ENCODE measurements at regions of chr1 and their contacts with region 1.

Region 1: DNA sequence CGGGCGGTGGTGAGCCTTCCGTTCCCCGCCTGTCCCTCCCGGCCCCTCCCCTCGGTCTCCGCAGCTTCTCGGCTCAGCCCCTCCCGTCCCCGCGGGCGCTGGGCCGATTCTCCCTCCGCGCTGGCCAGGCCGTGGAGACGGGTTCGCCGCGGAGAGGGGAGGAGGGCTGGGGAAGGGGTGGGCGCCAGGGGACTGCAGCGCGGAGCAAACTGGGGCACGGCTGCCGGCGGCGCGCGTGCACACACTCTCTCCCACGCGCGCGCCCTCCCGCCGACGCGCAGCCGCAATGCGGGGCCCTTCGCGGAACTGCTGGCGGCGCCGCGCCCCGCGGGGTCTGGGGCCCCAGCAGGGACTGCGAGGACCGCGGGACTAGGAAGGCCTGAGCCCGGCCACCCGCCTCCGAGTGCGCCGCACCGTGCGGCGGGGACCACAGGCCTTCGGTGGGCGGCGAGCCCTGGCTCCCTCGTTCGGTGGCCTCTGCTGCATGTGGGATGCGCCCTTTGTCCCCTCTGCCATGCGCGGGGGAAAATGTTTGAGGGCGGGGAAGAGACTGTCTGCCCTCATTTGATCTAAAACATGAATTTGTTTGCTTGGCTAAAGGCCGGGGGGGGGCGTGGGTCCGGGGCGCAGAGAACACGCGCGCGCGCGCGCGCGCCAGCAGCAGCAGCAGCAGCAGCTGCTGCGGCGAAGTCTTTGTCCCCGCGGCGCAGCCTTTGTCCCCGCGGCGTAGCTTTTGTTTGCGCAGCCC is 90.7 kb upstream of the VAMP3 start:
- DNase-seq: peak; percentile 70
- H3K4me3 ChIP-seq: peak overlapping the region; percentile 66
- H3K27ac ChIP-seq: peak overlapping the region; percentile 86
- H3K4me1 ChIP-seq: peaks cover 11% of the 10 kb centered on the region
- H3K27me3 ChIP-seq: no peaks in the 10 kb centered on the region
- CTCF ChIP-seq: no peak

Region 2: GRCh38 chr1:7667625-7668218 is 12.7 kb before region 1 on chr1:
- CTCF ChIA-PET with region 1: interaction called, 10 read pairs
- POLR2A ChIA-PET with region 1: no interaction called
- intact Hi-C with region 1: no loop called
- DNase-seq: peak; percentile 87
- H3K4me3 ChIP-seq: no peak overlapping the region
- H3K27ac ChIP-seq: no peak overlapping the region
- H3K4me1 ChIP-seq: peaks cover 4% of the 10 kb centered on the region
- H3K27me3 ChIP-seq: no peaks in the 10 kb centered on the region
- CTCF ChIP-seq: peak; percentile 99

Region 3: DNA sequence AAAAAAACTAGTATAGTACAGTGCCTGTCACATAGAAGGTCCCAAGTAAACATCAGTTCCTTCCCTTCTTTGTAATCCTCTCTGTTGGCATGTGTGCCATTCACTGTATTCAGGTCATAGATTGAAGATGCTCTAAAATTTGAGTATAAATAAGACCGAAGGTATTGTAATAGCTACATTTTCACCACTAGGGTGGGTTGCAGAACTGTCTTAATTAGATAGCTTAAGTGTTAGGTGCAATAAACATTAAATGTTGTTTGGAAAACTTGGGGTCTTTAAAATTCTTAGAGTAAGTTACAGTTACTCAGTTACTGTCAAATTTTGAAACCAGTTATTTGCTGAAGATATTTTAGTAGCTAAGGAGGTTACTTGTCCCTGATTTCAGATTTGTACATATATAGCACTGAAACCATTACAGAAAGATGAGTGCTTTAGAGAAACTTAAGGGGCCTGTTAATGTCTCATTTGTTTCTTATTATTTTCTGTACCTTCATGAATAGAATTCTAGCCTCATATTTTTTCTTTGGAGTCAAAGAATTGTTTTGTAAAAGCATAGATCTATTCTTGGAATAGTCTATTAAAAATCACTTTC is 128.0 kb after region 1 on chr1:
- CTCF ChIA-PET with region 1: no interaction called
- POLR2A ChIA-PET with region 1: interaction called, 17 read pairs
- intact Hi-C with region 1: no loop called
- DNase-seq: peak; percentile 65
- H3K4me3 ChIP-seq: no peak overlapping the region
- H3K27ac ChIP-seq: no peak overlapping the region
- H3K4me1 ChIP-seq: no peaks in the 10 kb centered on the region
- H3K27me3 ChIP-seq: no peaks in the 10 kb centered on the region
- CTCF ChIP-seq: peak; percentile 72

Measured in A673 (cell line).